Activated CD4-positive, alpha-beta memory T cell treated with anti-CD3 and anti-CD28 coated beads for 36 hours (primary cell): ENCODE measurements at regions of chr6 and their contacts with region 1.

Region 1: DNA sequence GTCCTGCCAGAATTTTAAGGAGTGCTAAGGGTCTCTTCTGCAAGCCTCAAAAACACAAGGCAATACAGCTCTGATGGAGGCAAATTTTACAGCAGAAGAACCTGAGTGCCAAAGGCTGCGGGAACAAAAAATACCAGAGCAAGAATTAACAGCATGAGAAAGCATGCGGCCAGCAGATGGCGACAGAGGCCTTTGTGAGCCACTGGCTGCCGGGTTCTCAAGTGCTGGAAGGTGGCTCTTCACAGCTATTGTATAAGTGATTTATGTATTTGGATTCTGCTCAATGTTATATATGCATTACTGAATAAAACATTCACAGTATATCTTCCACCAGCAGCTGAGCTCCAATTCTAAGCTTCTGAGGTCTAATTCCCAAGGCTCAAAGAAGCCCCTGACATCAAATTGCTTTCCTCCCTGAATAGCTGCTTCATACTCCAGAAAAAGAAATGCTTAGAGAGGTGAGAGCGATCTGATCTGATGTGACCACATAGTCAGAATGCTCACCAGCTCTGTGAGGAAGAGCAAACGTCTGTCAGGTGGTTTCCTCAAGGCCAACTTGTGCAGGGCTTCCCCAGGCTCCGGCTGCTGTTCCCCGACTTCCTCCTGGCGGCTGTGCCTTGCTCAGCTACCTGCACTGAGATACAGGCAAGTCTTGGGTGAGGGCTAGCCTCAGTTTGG is 58.6 kb downstream of the PPP1R3G start:
- DNase-seq: peak; percentile 86
- H3K4me3 Mint-ChIP-seq: no peak overlapping the region
- H3K27ac Mint-ChIP-seq: no peak overlapping the region
- H3K4me1 Mint-ChIP-seq: no peaks in the 10 kb centered on the region
- H3K27me3 Mint-ChIP-seq: no peaks in the 10 kb centered on the region

Region 2: GRCh38 chr6:5112066-5112799 is 31.5 kb before region 1 on chr6:
- CTCF ChIA-PET with region 1: no interaction called
- POLR2A ChIA-PET with region 1: no interaction called
- intact Hi-C with region 1: no loop called
- DNase-seq: no peak
- H3K4me3 Mint-ChIP-seq: no peak overlapping the region
- H3K27ac Mint-ChIP-seq: no peak overlapping the region
- H3K4me1 Mint-ChIP-seq: no peaks in the 10 kb centered on the region
- H3K27me3 Mint-ChIP-seq: no peaks in the 10 kb centered on the region

Region 3: DNA sequence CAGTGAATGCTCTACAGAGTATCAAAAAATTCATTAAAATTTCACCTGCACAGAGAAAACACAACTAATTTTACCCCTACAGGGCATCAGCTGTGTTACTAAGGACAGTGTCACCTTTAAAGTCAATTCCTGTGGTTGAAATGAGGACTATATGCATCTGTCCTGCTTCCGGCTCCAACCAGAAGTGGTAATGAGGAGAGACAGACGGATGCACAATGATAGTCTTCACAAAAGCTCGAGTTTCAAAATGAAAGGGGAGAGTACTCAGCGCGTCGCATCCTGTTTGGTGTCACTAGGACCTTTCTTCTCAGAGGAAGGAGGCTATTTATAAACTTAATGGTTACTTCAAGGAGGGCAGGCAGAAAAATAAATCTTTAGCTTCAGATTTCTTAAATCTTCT is 30.5 kb after region 1 on chr6:
- CTCF ChIA-PET with region 1: interaction called, 23 read pairs
- POLR2A ChIA-PET with region 1: no interaction called
- intact Hi-C with region 1: no loop called
- DNase-seq: peak; percentile 78
- H3K4me3 Mint-ChIP-seq: peak overlapping the region; percentile 27
- H3K27ac Mint-ChIP-seq: peak overlapping the region; percentile 71
- H3K4me1 Mint-ChIP-seq: peaks cover 40% of the 10 kb centered on the region
- H3K27me3 Mint-ChIP-seq: no peaks in the 10 kb centered on the region

Region 4: DNA sequence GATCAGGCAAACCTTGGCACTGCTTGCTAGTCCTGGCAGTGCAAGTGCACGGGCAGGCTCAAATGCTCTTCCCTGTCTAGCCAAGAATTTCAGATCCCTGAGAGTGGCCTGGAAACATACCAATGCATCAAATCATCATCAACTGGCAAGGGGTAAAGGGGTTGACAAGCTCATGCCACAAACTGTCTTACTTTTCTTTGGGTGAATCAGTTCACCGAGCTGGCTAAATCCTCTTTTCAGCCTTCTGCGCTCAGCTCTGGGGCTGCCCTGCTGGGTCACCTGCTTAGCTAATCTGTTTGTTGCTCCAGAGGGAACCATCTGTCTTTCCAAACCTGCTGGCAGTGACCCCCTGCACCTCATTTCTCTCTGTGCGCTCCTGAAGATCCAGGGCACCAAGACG is 57.5 kb after region 1 on chr6:
- CTCF ChIA-PET with region 1: interaction called, 14 read pairs
- POLR2A ChIA-PET with region 1: no interaction called
- intact Hi-C with region 1: no loop called
- DNase-seq: no peak
- H3K4me3 Mint-ChIP-seq: no peak overlapping the region
- H3K27ac Mint-ChIP-seq: no peak overlapping the region
- H3K4me1 Mint-ChIP-seq: peaks cover 25% of the 10 kb centered on the region
- H3K27me3 Mint-ChIP-seq: no peaks in the 10 kb centered on the region

Region 5: GRCh38 chr6:5214570-5215052 is 70.8 kb after region 1 on chr6:
- CTCF ChIA-PET with region 1: interaction called, 20 read pairs
- POLR2A ChIA-PET with region 1: no interaction called
- intact Hi-C with region 1: no loop called
- DNase-seq: peak; percentile 58
- H3K4me3 Mint-ChIP-seq: no peak overlapping the region
- H3K27ac Mint-ChIP-seq: no peak overlapping the region
- H3K4me1 Mint-ChIP-seq: peaks cover 4% of the 10 kb centered on the region
- H3K27me3 Mint-ChIP-seq: no peaks in the 10 kb centered on the region

Region 6: DNA sequence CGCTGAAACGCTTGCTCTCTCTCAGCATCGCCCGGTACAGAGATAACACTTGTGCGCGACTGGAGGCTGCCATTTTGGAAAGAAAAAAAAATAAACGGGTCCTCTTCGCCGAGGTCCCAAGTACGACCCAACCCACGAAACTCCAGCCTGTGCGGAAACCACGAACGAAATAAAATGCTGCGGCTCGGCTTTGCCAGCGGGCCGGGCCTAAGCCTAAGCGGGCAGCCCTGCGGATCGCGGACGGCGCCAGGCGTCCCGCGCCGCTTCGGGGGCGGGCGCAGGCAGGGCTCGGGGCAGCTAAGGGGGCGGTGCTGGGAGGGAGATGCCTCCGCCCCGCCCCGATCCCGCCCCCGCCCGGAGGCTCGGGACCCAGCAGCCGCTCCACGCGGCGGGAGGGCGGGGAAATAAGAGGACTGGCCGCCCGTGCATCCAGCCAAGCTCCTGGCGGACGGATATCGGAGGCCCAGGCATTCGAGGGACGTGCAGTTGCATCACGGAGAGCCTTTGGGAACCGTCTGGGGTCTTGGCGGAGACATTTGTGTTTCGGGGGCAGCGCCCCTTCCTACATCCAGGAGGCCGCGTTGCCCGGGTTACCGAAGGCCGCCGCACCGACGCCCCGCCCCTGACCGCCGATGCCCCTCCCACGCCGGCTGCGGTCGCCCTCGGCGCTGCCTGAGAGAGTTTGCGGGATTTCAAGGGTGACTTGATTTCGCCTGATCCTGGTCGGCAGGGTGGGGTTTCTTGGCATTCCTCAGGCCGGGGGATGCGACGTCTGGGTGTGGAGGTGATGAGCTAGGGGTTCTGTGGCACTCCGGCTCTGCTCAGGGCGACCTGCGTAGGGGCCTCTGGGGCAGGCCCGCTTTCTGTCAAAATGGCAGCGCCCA is 117.1 kb after region 1 on chr6 and contains the starts of genes FARS2 and LYRM4:
- CTCF ChIA-PET with region 1: interaction called, 15 read pairs
- POLR2A ChIA-PET with region 1: no interaction called
- intact Hi-C with region 1: loop called (anchors 5 kb)
- DNase-seq: peak; percentile 93
- H3K4me3 Mint-ChIP-seq: peak within 1 kb of the TSS; percentile 98
- H3K27ac Mint-ChIP-seq: peak within 1 kb of the TSS; percentile 99
- H3K4me1 Mint-ChIP-seq: peaks cover 36% of the 10 kb centered on the region
- H3K27me3 Mint-ChIP-seq: no peaks in the 10 kb centered on the region
- total RNA-seq, gene FARS2: 22.7 to 23.7 TPM
- total RNA-seq, gene LYRM4: 50.6 to 53.6 TPM

Region 7: GRCh38 chr6:5379647-5380242 is 236.0 kb after region 1 on chr6:
- CTCF ChIA-PET with region 1: interaction called, 34 read pairs
- POLR2A ChIA-PET with region 1: no interaction called
- intact Hi-C with region 1: loop called (anchors 1 kb)
- DNase-seq: peak; percentile 43
- H3K4me3 Mint-ChIP-seq: no peak overlapping the region
- H3K27ac Mint-ChIP-seq: no peak overlapping the region
- H3K4me1 Mint-ChIP-seq: no peaks in the 10 kb centered on the region
- H3K27me3 Mint-ChIP-seq: no peaks in the 10 kb centered on the region

Region 8: DNA sequence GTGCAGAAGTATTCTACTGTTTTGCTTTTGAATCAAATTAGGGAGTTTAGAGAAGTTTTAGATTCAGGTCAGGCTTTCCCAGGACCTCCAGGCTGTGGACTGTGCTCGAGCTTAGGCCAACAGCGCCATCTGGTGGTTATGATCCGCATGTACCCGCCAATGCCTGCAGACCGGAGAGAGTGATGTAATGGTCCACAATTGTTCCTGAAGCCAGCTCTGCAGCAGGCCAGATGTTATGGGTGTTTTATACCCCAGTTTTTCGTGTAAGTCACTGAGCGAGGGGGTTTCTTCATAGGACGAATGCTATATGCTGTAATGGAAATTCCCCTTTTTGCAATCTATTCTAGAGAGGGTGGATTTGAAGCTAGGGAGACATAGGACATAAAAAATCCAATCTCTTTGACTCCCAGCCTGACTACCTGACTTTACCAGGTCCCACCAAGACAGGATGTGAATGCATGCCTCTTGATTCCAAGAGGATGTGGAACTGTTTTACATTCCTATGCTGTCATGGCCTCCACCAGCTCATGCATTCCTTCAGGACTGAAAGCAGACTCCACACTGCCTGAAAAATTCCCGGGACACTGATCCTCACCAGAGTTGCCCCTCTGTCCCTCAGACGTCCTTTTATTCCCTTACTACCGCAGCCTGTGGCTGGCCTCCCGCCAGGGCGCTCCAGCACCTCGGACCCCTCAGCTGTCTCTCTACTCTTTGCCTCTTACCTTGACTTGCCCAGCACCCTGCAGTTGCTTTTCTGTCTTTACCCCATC is 1403.5 kb after region 1 on chr6:
- CTCF ChIA-PET with region 1: no interaction called
- POLR2A ChIA-PET with region 1: no interaction called
- intact Hi-C with region 1: loop called (anchors 10 kb)
- DNase-seq: peak; percentile 88
- H3K4me3 Mint-ChIP-seq: peak overlapping the region; percentile 57
- H3K27ac Mint-ChIP-seq: peak overlapping the region; percentile 3
- H3K4me1 Mint-ChIP-seq: peaks cover 3% of the 10 kb centered on the region
- H3K27me3 Mint-ChIP-seq: peaks cover 44% of the 10 kb centered on the region